RWPE1 (cell line): ENCODE measurements at regions of chr2 and their contacts with region 1.

Region 1: GRCh38 chr2:75608684-75609333 is 37.8 kb upstream of the MRPL19 start:
- DNase-seq: peak; percentile 82
- H3K27ac ChIP-seq: no peak overlapping the region
- CTCF ChIP-seq: peak; percentile 94

Region 2: DNA sequence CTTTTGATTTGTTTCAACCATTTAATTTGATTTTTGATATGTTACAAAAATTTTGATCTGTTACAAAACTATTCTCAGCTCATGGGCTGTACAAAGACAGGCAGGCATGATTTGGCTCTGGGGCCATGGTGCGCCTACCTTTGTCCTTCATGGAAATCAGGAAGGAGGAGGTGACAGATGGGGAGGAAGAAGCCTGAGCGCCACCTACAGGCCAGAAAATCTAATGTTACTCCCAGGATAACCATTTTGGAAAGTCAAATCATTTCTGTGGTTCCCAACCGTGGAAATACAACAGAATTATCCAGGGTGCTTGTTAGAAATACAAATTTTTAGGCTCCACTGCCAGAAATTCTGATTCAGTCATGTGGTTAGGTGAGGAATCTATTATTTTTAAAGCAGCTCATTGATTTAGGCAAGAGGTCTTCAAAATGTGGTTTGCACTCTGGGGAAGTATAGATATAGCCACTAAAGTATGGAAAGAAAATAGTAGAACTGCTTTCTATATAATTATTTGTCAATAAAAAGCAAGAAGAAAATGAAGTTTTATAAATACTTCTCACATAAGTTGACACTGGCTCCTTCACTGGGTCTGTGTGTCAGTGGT is 142.0 kb before region 1 on chr2:
- CTCF ChIA-PET with region 1: interaction called, 17 read pairs
- POLR2A ChIA-PET with region 1: no interaction called
- DNase-seq: peak; percentile 30
- H3K27ac ChIP-seq: no peak overlapping the region
- CTCF ChIP-seq: peak; percentile 29; the same call in 1 of the 2 replicates

Region 3: DNA sequence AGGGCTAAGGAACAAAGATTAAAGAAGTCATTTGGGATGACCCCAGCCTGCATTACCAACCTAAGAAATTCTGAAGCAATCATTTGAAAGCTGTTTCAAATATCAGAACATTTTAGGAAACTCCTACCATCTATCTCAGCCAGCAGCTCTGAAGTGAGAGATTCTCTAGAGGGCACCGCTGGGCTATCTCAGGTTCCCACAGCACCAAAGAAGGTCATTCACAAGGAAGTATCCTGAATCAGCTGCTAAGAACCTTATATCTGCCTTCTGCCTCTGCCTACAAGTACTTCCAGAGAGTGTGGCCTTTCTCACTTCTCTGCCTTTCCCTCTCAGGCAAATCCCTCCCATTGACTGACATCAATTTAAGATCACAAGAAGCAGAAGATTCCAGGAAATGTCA is 34.7 kb before region 1 on chr2:
- CTCF ChIA-PET with region 1: interaction called, 14 read pairs
- POLR2A ChIA-PET with region 1: no interaction called
- DNase-seq: no peak
- H3K27ac ChIP-seq: no peak overlapping the region
- CTCF ChIP-seq: no peak